HepG2 (cell line): ENCODE measurements at regions of chr17 and their contacts with region 1.

Region 1: GRCh38 chr17:80477647-80478478 is 1.5 kb upstream of the NPTX1 start:
- DNase-seq: no peak
- ATAC-seq: peak; percentile 74
- H3K4me3 ChIP-seq: peak overlapping the region in 1 of 3 experiments; percentile 55; a peak in 1 of 6 replicates
- H3K27ac ChIP-seq: no peak overlapping the region
- H3K4me1 ChIP-seq: peaks cover 33% of the 10 kb centered on the region
- H3K27me3 ChIP-seq: peaks cover 61 to 97% of the 10 kb centered on the region in 2 experiments
- CTCF ChIP-seq: peak; percentile 85
- EP300 ChIP-seq: no peak
- POLR2A ChIP-seq: no peak
- RAD21 ChIP-seq: peak; percentile 90

Region 2: GRCh38 chr17:80491478-80492342 is 13.8 kb after region 1 on chr17:
- CTCF ChIA-PET with region 1: no interaction called
- POLR2A ChIA-PET with region 1: no interaction called
- in situ Hi-C with region 1: no loop called
- intact Hi-C with region 1: no loop called
- DNase-seq: peak; percentile 89
- ATAC-seq: peak; percentile 76
- H3K4me3 ChIP-seq: no peak overlapping the region
- H3K27ac ChIP-seq: no peak overlapping the region
- H3K4me1 ChIP-seq: peaks cover 14% of the 10 kb centered on the region
- H3K27me3 ChIP-seq: peaks cover 6 to 37% of the 10 kb centered on the region in 2 experiments
- CTCF ChIP-seq: no peak
- EP300 ChIP-seq: 0 out of 4 replicates have a peak, but pooled peaks of 1 of the 2 experiments have one; percentile 7
- POLR2A ChIP-seq: no peak
- RAD21 ChIP-seq: no peak

Region 3: DNA sequence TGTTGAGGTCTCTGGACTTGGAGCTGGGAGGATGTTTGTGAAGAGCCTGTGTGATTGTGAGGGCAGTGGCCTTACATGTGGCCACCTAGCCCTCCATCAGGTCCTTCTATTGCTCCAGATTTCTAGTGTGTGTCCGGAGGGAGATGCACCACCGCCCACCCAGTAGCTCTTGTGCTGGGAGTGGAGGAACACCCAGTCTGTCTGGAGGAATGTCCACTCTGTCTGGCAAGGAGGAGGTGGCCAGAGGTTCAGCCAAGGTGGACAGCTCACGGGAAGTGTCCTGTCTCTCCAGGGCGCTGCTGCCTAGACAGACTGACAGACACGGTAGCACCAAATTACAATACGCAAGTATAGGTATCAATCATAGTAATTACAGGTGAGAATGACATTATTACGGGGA is 77.4 kb after region 1 on chr17:
- CTCF ChIA-PET with region 1: no interaction called
- POLR2A ChIA-PET with region 1: no interaction called
- in situ Hi-C with region 1: no loop called
- intact Hi-C with region 1: no loop called
- DNase-seq: no peak
- ATAC-seq: no peak
- H3K4me3 ChIP-seq: no peak overlapping the region
- H3K27ac ChIP-seq: no peak overlapping the region
- H3K4me1 ChIP-seq: 0 out of 2 replicates have a peak, but pooled peaks cover under 1% of the 10 kb centered on the region
- H3K27me3 ChIP-seq: no peaks in the 10 kb centered on the region
- CTCF ChIP-seq: no peak
- EP300 ChIP-seq: no peak
- POLR2A ChIP-seq: no peak
- RAD21 ChIP-seq: no peak

Region 4: DNA sequence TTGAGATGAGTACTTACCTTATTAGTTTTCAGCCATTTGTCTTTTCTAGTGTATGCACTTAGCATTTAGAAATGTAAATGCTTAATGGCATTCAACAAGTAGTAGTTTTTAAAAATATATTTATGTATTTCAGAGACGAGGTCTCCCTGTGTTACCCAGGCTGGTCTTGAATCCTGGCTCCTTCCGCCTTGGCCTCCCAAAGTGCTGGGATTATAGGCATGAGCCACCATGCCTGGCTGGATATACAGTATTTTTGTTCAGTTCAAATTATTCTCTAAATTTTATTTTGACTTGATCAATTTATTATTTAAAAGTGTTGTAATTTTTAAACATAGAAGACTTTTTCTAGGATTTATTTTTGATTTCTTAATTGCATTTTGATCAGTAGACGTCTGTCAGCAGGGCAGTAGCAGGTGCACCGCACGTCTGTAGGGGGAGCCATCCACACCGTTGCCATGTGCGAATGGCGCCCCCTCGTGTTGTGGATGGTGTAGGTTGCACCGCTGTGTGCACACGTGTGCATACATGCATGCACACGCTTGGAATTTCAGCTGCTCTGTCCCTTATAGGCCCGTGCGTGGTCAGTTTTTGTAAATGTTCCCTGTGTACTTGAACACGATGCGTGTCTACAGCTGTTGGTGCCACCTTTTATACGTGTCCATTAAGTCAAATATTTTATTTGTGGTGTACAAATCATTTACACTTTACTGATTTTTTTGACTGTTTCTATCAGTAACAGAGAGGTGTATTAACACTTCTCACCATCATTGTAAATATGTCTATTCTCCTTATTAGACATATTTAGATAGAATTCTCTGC is 97.4 kb after region 1 on chr17:
- CTCF ChIA-PET with region 1: interaction called, 25 read pairs
- POLR2A ChIA-PET with region 1: no interaction called
- in situ Hi-C with region 1: no loop called
- intact Hi-C with region 1: no loop called
- DNase-seq: peak; percentile 86
- ATAC-seq: peak; percentile 99
- H3K4me3 ChIP-seq: no peak overlapping the region
- H3K27ac ChIP-seq: no peak overlapping the region
- H3K4me1 ChIP-seq: peaks cover 5% of the 10 kb centered on the region; the same call in 1 of the 2 replicates
- H3K27me3 ChIP-seq: no peaks in the 10 kb centered on the region
- CTCF ChIP-seq: peak; percentile 100
- EP300 ChIP-seq: peak in 1 of 2 experiments; percentile 21; a peak in 1 of 4 replicates
- POLR2A ChIP-seq: no peak
- RAD21 ChIP-seq: peak; percentile 99

Region 5: DNA sequence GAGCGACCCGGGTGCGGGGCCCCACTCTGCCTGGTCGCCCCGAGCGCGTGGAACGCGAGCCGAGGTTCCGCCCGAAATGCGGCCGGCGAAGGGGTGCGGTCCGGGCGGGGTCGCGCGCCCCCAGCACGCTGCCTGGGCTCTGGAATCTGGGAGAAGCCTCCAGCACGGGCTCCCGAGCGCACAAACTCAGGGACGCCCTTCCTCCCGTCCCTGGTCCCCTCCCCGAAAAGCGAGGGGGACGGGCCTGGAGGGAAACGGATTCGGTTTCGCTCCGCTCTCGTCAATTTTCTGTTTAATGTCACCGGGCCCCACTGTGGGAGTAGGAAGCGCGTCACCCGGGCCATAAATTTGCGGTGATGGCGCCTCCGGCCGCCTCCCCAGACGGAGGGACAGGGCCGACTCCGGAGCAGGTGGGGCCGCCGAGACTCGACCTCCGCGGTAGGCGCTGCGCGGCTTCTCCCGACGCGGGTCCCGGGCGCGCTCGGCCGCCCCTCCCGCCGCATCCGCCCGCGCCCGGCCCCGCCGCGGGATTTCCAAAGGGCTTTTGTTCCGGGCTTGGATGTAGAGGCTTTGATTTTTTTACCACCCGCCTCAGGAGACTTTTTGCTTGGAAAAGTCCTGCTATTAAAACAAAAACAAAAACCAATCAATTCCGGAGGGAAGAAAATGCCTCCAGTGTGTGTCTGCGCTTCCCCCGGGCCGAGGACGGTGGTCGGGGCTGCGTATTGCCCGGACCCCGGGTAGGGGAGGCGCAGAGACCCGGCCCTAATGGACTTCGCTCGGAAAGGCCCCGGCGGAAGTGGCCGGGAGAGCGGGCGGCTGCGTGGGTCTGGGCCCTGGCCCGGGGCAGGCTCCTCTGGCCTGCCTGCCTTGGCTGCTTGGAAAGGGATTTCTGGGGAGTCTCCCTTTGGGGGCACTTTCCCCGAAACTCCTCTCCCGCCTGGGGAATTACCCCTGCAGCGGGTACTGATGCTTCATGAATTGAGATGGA is 909.5 kb after region 1 on chr17:
- CTCF ChIA-PET with region 1: no interaction called
- POLR2A ChIA-PET with region 1: no interaction called
- in situ Hi-C with region 1: no loop called
- intact Hi-C with region 1: loop called (anchors 5 kb)
- DNase-seq: no peak
- ATAC-seq: peak; percentile 14
- H3K4me3 ChIP-seq: peak overlapping the region; percentile 68 to 76 (median 70)
- H3K27ac ChIP-seq: peak overlapping the region; percentile 38
- H3K4me1 ChIP-seq: peaks cover 73% of the 10 kb centered on the region
- H3K27me3 ChIP-seq: peaks cover 14 to 88% of the 10 kb centered on the region in 2 experiments
- CTCF ChIP-seq: no peak
- EP300 ChIP-seq: no peak
- POLR2A ChIP-seq: no peak
- RAD21 ChIP-seq: no peak